ENCODE measurements at regions of chr6 and their contacts with region 1.

Region 1: DNA sequence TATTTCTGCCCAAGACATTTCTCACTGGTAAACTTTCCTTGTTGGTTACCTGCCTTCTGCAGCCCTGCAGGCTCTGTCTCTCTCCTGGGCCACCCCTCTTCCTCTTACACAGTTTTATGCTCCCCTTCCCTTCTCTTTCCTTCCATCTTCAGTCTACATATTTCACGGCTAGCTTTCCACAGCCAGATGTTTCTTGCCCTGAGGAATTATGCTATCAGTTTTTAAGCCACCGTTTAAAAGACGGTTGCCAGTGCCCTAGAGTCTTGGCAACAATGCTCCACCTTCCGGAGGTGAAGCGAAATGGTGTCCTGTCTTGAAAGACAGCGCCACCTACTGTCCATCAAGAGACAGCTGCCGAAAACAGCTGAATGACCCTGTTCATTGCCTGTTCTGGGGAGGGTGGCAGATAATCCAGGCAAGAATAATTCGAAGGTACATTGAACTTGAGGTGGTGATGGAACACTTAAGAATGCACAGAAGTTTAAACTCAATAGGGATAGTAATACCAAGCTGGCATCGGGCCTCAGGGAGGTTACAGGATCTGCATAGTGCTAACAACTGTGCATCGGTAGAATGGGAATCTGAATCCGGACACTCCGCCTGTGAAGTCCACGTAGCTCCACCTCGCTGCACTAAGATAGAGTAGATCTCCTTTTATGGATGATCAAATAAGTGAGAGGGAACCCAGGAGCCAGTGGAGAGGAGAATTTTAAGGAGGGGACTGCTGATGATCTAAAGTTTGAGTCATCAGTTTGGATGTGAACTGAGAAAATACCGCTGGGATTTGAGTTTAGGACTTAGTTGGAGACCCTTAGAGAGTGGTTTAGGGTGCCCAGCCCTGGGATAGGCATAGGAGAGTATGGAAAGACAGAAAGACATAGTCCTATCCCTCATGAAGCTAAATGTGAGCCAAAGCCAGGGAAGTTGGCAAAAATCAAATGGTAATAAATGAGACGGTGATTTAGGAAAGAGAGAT is 4.8 kb upstream of the TRIM40 start:
- DNase-seq: peak; percentile 80
- H3K4me3 Mint-ChIP-seq: no peak overlapping the region
- H3K27ac Mint-ChIP-seq: no peak overlapping the region
- H3K4me1 Mint-ChIP-seq: peaks cover 15% of the 10 kb centered on the region
- H3K27me3 Mint-ChIP-seq: peaks cover 51% of the 10 kb centered on the region

Region 2: DNA sequence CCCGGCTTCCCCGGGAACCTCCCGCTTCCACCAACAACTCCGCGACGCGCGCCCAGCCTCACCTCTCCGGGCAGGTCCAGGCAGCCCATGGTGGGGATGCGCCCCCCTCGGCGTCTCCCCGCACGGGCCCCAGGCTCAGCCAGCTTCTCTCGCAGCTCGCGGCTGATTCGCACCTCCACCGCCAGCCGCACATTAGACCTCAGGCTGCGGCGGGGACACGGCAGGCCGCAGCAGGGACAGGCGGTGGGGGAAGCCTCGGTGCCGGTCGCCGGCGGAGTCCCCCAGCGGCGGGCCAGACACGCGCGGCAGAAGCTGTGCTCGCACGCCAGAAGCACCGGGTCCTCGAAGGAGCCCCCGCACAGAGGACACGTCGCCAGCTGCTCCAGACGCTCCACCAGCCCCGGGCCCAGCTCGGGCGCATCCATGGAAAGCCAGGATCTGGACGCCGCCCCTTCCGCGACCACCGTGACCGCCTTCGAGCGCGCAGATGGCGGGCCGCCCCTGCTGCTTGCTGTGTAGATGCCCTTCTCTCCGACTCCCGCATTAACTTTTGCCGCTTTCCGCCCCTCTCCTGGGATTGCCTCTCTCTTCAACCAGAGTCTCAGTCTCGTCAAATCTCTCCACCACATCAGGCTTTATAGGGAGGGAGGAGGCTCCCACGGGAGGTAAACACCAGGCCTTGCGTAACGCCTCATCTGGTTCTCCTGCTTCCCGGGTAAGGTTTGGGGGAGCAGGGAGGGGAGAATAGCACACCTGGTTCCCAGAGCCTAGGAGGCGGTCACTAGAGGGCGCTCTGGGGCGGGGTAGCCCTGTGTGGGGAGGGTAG is 55.8 kb before region 1 on chr6 and contains the start of gene RNF39:
- CTCF ChIA-PET with region 1: interaction called, 3 read pairs
- intact Hi-C with region 1: loop called (anchors 2 kb)
- DNase-seq: peak; percentile 38
- H3K4me3 Mint-ChIP-seq: peak within 1 kb of the TSS; percentile 67
- H3K27ac Mint-ChIP-seq: no peak within 1 kb of the TSS
- H3K4me1 Mint-ChIP-seq: peaks cover 39% of the 10 kb centered on the region
- H3K27me3 Mint-ChIP-seq: peaks cover 35% of the 10 kb centered on the region
- total RNA-seq, gene RNF39: not detected

Region 3: GRCh38 chr6:30092852-30093543 is 38.2 kb before region 1 on chr6:
- CTCF ChIA-PET with region 1: interaction called, 10 read pairs
- intact Hi-C with region 1: no loop called
- DNase-seq: no peak
- H3K4me3 Mint-ChIP-seq: no peak overlapping the region
- H3K27ac Mint-ChIP-seq: no peak overlapping the region
- H3K4me1 Mint-ChIP-seq: peaks cover 9% of the 10 kb centered on the region
- H3K27me3 Mint-ChIP-seq: peaks cover 9% of the 10 kb centered on the region

Region 4: DNA sequence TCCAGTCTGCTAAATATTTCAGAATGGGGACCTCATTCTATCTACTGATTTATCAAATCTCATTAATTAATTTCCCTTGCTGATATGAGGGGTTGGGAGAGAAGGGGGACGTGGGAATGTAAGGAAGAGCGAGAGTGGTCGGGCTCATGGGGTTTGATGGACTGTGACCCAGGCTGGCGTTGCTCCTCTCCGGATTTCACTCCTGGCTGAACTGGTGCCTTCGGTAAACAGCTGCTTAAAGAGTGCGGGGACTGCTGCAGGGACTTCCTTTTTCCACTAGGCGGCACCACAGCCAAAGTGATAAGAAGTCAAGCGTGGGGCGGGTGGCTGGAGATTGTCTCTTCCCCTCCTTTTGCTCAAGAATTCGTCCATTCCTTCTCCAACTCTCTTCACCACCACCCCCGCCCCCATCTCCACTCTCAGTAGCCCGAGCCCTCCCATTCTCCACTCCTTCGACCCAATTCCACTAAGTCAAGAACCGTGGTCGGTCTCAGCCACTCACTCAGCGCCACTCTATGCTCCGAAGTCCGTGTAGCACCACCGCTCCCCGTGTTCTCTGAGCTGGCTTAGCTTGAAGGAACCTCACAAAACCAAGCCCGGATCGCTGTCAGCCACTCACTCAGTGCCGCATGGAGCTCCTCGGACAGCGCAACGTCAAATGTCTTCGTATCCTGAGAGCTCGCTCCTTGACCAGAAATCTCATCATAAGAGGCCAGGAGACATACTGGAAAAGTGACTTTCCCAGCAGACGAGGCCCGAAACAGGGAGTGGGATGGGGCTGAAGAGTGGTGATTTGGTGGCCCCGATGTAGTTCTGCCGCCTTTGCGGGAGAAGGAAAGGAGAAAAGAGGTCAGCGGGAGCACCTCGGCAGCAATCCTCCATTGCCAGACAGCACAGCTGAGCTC is 28.0 kb before region 1 on chr6:
- CTCF ChIA-PET with region 1: interaction called, 227 read pairs
- intact Hi-C with region 1: loop called (anchors 1 kb)
- DNase-seq: peak; percentile 93
- H3K4me3 Mint-ChIP-seq: peak overlapping the region; percentile 78
- H3K27ac Mint-ChIP-seq: no peak overlapping the region
- H3K4me1 Mint-ChIP-seq: peaks cover 45% of the 10 kb centered on the region
- H3K27me3 Mint-ChIP-seq: peaks cover 26% of the 10 kb centered on the region

Region 5: DNA sequence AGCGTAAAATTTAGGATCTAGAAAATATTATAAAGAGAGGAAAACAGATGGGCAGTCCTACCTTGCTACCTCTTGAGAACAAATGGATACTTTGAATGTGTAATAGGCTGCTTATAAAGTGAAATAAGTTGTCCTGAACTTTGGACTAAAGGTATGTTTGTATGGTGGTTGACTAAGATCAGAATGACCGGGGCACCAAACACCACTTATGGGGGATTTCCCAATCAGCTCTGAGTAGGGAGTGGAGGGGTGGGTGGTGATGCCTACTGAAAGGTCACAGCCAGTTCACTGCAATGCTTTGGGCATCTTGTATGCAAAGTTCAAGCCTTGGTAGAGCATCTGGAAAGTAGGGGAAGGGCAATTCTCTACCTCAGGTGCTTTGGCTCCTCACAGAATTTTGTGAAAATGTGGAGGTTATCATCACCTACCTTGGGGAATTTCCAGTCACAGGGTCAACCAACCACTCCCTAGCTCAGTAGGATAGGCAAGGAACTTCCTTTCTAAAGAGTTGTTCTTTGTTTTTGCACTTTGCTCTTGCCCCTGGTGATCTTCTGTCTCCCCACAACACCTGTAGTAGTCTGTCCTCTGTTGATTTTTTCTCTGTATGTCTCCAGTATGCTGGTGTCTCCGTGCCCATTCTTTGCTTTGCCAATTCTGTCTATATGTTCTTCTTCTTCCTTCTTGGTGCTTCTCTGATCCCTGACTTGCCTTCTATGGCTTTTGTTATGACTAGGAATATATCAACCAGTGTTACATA is 18.0 kb before region 1 on chr6 and contains the start of gene TRIM31:
- CTCF ChIA-PET with region 1: interaction called, 227 read pairs
- intact Hi-C with region 1: no loop called
- DNase-seq: no peak
- H3K4me3 Mint-ChIP-seq: no peak within 1 kb of the TSS
- H3K27ac Mint-ChIP-seq: no peak within 1 kb of the TSS
- H3K4me1 Mint-ChIP-seq: peaks cover 11% of the 10 kb centered on the region
- H3K27me3 Mint-ChIP-seq: peaks cover 20% of the 10 kb centered on the region
- total RNA-seq, gene TRIM31: 0.17 TPM in 1 of 2 experiments, not detected in the other

Region 6: GRCh38 chr6:30169658-30170614 is 38.8 kb after region 1 on chr6:
- CTCF ChIA-PET with region 1: interaction called, 30 read pairs
- intact Hi-C with region 1: loop called (anchors 1 kb)
- DNase-seq: peak; percentile 26
- H3K4me3 Mint-ChIP-seq: no peak overlapping the region
- H3K27ac Mint-ChIP-seq: no peak overlapping the region
- H3K4me1 Mint-ChIP-seq: peaks cover 21% of the 10 kb centered on the region
- H3K27me3 Mint-ChIP-seq: peaks cover 43% of the 10 kb centered on the region

Region 7: DNA sequence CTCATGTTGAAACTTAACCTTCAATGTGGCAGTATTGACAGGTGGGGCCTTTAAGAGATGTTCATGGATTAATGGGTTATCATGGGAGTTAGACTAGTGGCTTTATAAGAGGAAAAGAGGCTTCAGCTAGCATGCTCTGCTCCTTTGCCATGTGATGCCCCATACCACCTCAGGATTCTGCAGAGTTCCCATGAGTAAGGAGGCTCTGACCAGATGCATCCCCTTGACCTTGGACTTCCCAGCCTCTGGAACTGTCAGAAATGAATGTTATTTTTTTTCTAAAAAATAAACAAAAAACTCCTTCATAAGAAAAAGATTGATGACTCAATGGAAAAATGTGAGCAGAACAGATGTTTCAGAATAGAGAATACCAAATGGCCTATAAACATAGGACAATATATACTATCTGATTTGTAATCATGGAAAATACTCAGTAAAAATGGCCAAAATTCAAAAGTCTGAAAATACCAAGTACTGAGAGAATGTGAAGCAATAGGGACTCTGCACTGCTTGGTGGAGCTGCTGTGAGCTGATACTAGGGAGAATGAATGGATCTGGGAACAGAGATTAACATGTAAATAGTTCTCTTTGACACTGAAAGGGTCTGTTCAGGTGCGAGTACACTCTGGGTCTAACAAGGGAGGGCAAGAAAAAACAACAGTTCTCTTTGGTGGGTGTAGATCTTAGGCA is 188.1 kb after region 1 on chr6:
- CTCF ChIA-PET with region 1: no interaction called
- intact Hi-C with region 1: no loop called
- DNase-seq: no peak
- H3K4me3 Mint-ChIP-seq: no peak overlapping the region
- H3K27ac Mint-ChIP-seq: peak overlapping the region; percentile 4
- H3K4me1 Mint-ChIP-seq: peaks cover 66% of the 10 kb centered on the region
- H3K27me3 Mint-ChIP-seq: no peaks in the 10 kb centered on the region

Measured in activated naive CD4-positive, alpha-beta T cell treated with anti-CD3 and anti-CD28 coated beads for 36 hours (primary cell).